ENCODE measurements at regions of chr16 and their contacts with region 1.

Region 1: GRCh38 chr16:72832621-72833248 is 215.2 kb downstream of the ZFHX3 start:
- DNase-seq: no peak
- H3K4me3 ChIP-seq: no peak overlapping the region
- H3K27ac ChIP-seq: no peak overlapping the region
- H3K4me1 ChIP-seq: peaks cover 0 to 10% (median 0%) of the 10 kb centered on the region in 3 donors
- H3K27me3 ChIP-seq: no peaks in the 10 kb centered on the region
- CTCF ChIP-seq: peak; percentile 80 to 99 (median 90)
- POLR2A ChIP-seq: no peak

Region 2: GRCh38 chr16:72400257-72400882 is 432.4 kb before region 1 on chr16:
- intact Hi-C with region 1: no loop called
- DNase-seq: no peak
- H3K4me3 ChIP-seq: no peak overlapping the region
- H3K27ac ChIP-seq: no peak overlapping the region
- H3K4me1 ChIP-seq: no peaks in the 10 kb centered on the region
- H3K27me3 ChIP-seq: no peaks in the 10 kb centered on the region
- CTCF ChIP-seq: peak in 5 of 6 experiments; percentile 37 to 65 (median 43)
- POLR2A ChIP-seq: no peak

Region 3: GRCh38 chr16:73047518-73048291 is 215.0 kb after region 1 on chr16 and contains the start of gene ZFHX3:
- intact Hi-C with region 1: loop called (anchors 10 kb)
- DNase-seq: no peak
- H3K4me3 ChIP-seq: peak within 1 kb of the TSS; percentile 71 to 91 (median 76)
- H3K27ac ChIP-seq: peak within 1 kb of the TSS; percentile 77 to 96 (median 92)
- H3K4me1 ChIP-seq: peaks cover 8 to 85% (median 29%) of the 10 kb centered on the region in 3 donors
- H3K27me3 ChIP-seq: no peaks in the 10 kb centered on the region
- CTCF ChIP-seq: no peak
- POLR2A ChIP-seq: no peak
- total RNA-seq, gene ZFHX3: 3.5 to 12.8 (median 4.5) TPM

Region 4: DNA sequence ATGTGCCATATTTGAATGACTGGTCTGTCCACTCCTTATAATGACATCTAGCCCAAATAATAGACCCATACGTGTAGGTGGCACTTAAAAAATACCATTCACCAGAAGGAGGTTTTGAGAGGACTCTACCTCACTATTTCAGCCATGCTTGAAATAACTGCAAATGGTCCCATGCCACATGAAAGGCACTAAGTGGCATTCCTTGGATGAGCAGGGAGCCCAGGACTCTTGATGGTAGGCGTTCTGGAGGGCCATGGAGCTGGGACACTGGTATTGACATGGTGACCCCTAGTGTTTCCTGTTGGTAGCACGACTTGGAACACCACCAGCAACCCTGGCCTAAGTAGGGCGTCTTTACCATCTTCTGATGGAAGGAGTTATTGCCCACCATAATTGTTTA is 363.9 kb after region 1 on chr16:
- intact Hi-C with region 1: loop called (anchors 5 kb)
- DNase-seq: no peak
- H3K4me3 ChIP-seq: no peak overlapping the region
- H3K27ac ChIP-seq: no peak overlapping the region
- H3K4me1 ChIP-seq: no peaks in the 10 kb centered on the region
- H3K27me3 ChIP-seq: peaks cover 0 to 13% (median 0%) of the 10 kb centered on the region in 4 donors
- CTCF ChIP-seq: peak in 5 of 6 experiments; percentile 56 to 71 (median 61)
- POLR2A ChIP-seq: no peak